ENCODE measurements at regions of chr12 and their contacts with region 1.

Region 1: GRCh38 chr12:108731105-108731865 is at the start of gene CORO1C:
- DNase-seq: peak; percentile 92
- ATAC-seq: peak; percentile 71
- H3K4me3 ChIP-seq: peak within 1 kb of the TSS; percentile 91 to 96 (median 95)
- H3K27ac ChIP-seq: peak within 1 kb of the TSS; percentile 95
- H3K4me1 ChIP-seq: peaks cover 72% of the 10 kb centered on the region
- H3K27me3 ChIP-seq: no peaks in the 10 kb centered on the region; a peak in 1 of 5 replicates
- CTCF ChIP-seq: peak; percentile 94
- EP300 ChIP-seq: 0 out of 4 replicates have a peak, but pooled peaks have one; percentile 4 to 15
- POLR2A ChIP-seq: peak; percentile 83 to 86
- RAD21 ChIP-seq: peak; percentile 80
- total RNA-seq, gene CORO1C: 73.7 and 128 TPM in 2 replicates

Region 2: GRCh38 chr12:108337235-108338223 is 393.8 kb before region 1 on chr12:
- CTCF ChIA-PET with region 1: no interaction called
- POLR2A ChIA-PET with region 1: no interaction called
- in situ Hi-C with region 1: no loop called
- intact Hi-C with region 1: no loop called
- DNase-seq: peak; percentile 26
- ATAC-seq: peak; percentile 88
- H3K4me3 ChIP-seq: no peak overlapping the region
- H3K27ac ChIP-seq: no peak overlapping the region
- H3K4me1 ChIP-seq: no peaks in the 10 kb centered on the region
- H3K27me3 ChIP-seq: peaks cover 5 to 24% of the 10 kb centered on the region in 2 experiments; a peak in 4 of 5 replicates
- CTCF ChIP-seq: peak; percentile 38
- EP300 ChIP-seq: no peak
- POLR2A ChIP-seq: no peak
- RAD21 ChIP-seq: no peak

Region 3: GRCh38 chr12:108562348-108563135 is 168.7 kb before region 1 on chr12 and contains the start of gene ISCU:
- CTCF ChIA-PET with region 1: no interaction called
- POLR2A ChIA-PET with region 1: interaction called, 4 read pairs
- in situ Hi-C with region 1: no loop called
- intact Hi-C with region 1: loop called (anchors 5 kb)
- DNase-seq: peak; percentile 93
- ATAC-seq: peak; percentile 83
- H3K4me3 ChIP-seq: peak within 1 kb of the TSS; percentile 96 to 100 (median 99)
- H3K27ac ChIP-seq: peak within 1 kb of the TSS; percentile 97
- H3K4me1 ChIP-seq: peaks cover 30% of the 10 kb centered on the region
- H3K27me3 ChIP-seq: no peaks in the 10 kb centered on the region; a peak in 1 of 5 replicates
- CTCF ChIP-seq: no peak; the same call in 1 of the 2 replicates
- EP300 ChIP-seq: no peak
- POLR2A ChIP-seq: peak; percentile 63 to 78
- RAD21 ChIP-seq: peak; percentile 31; the same call in 1 of the 2 replicates
- total RNA-seq, gene ISCU: 107 and 131 TPM in 2 replicates

Region 4: GRCh38 chr12:108664338-108665258 is 66.7 kb before region 1 on chr12:
- CTCF ChIA-PET with region 1: no interaction called
- POLR2A ChIA-PET with region 1: interaction called, 6 read pairs
- in situ Hi-C with region 1: loop called (anchors 5 kb)
- intact Hi-C with region 1: loop called (anchors 1 kb)
- DNase-seq: peak; percentile 92
- ATAC-seq: peak; percentile 86
- H3K4me3 ChIP-seq: peak overlapping the region in 1 of 3 experiments; percentile 8; a peak in 1 of 6 replicates
- H3K27ac ChIP-seq: peak overlapping the region; percentile 73
- H3K4me1 ChIP-seq: peaks cover 54% of the 10 kb centered on the region
- H3K27me3 ChIP-seq: no peaks in the 10 kb centered on the region
- CTCF ChIP-seq: peak; percentile 95
- EP300 ChIP-seq: peak in 1 of 2 experiments; percentile 82; a peak in 2 of 4 replicates
- POLR2A ChIP-seq: no peak
- RAD21 ChIP-seq: peak; percentile 90

Region 5: GRCh38 chr12:108691175-108691997 is 39.9 kb before region 1 on chr12:
- CTCF ChIA-PET with region 1: no interaction called
- POLR2A ChIA-PET with region 1: interaction called, 12 read pairs
- in situ Hi-C with region 1: no loop called
- intact Hi-C with region 1: loop called (anchors 2 kb)
- DNase-seq: peak; percentile 96
- ATAC-seq: peak; percentile 97
- H3K4me3 ChIP-seq: peak overlapping the region in 2 of 3 experiments; percentile 22 to 49; a peak in 3 of 6 replicates
- H3K27ac ChIP-seq: peak overlapping the region; percentile 86
- H3K4me1 ChIP-seq: peaks cover 55% of the 10 kb centered on the region
- H3K27me3 ChIP-seq: no peaks in the 10 kb centered on the region
- CTCF ChIP-seq: peak; percentile 29; the same call in 1 of the 2 replicates
- EP300 ChIP-seq: peak; percentile 37 to 51; a peak in 2 of 4 replicates
- POLR2A ChIP-seq: peak in 1 of 2 experiments; percentile 73; a peak in 2 of 4 replicates
- RAD21 ChIP-seq: no peak

Region 6: GRCh38 chr12:108701779-108702441 is 29.4 kb before region 1 on chr12:
- CTCF ChIA-PET with region 1: no interaction called
- POLR2A ChIA-PET with region 1: no interaction called
- in situ Hi-C with region 1: no loop called
- intact Hi-C with region 1: no loop called
- DNase-seq: no peak
- ATAC-seq: no peak
- H3K4me3 ChIP-seq: no peak overlapping the region
- H3K27ac ChIP-seq: no peak overlapping the region
- H3K4me1 ChIP-seq: peaks cover 32% of the 10 kb centered on the region
- H3K27me3 ChIP-seq: no peaks in the 10 kb centered on the region
- CTCF ChIP-seq: no peak
- EP300 ChIP-seq: no peak
- POLR2A ChIP-seq: no peak
- RAD21 ChIP-seq: no peak

Region 7: GRCh38 chr12:108773798-108774788 is 42.8 kb after region 1 on chr12:
- CTCF ChIA-PET with region 1: no interaction called
- POLR2A ChIA-PET with region 1: no interaction called
- in situ Hi-C with region 1: no loop called
- intact Hi-C with region 1: loop called (anchors 5 kb)
- DNase-seq: peak; percentile 96
- ATAC-seq: peak; percentile 92
- H3K4me3 ChIP-seq: peak overlapping the region; percentile 46 to 74 (median 69)
- H3K27ac ChIP-seq: peak overlapping the region; percentile 45
- H3K4me1 ChIP-seq: peaks cover 66% of the 10 kb centered on the region
- H3K27me3 ChIP-seq: no peaks in the 10 kb centered on the region
- CTCF ChIP-seq: peak; percentile 32; the same call in 1 of the 2 replicates
- EP300 ChIP-seq: peak; percentile 72 to 89; a peak in 3 of 4 replicates
- POLR2A ChIP-seq: peak in 1 of 2 experiments; percentile 47; a peak in 1 of 4 replicates
- RAD21 ChIP-seq: no peak

Region 8: GRCh38 chr12:108826101-108826806 is 95.0 kb after region 1 on chr12:
- CTCF ChIA-PET with region 1: no interaction called
- POLR2A ChIA-PET with region 1: no interaction called
- in situ Hi-C with region 1: no loop called
- intact Hi-C with region 1: no loop called
- DNase-seq: no peak
- ATAC-seq: no peak
- H3K4me3 ChIP-seq: no peak overlapping the region
- H3K27ac ChIP-seq: no peak overlapping the region
- H3K4me1 ChIP-seq: no peaks in the 10 kb centered on the region
- H3K27me3 ChIP-seq: no peaks in the 10 kb centered on the region
- CTCF ChIP-seq: no peak
- EP300 ChIP-seq: no peak
- POLR2A ChIP-seq: no peak
- RAD21 ChIP-seq: no peak